Activated CD4-positive, alpha-beta memory T cell treated with anti-CD3 and anti-CD28 coated beads for 36 hours (primary cell): ENCODE measurements at regions of chr2 and their contacts with region 1.

Region 1: DNA sequence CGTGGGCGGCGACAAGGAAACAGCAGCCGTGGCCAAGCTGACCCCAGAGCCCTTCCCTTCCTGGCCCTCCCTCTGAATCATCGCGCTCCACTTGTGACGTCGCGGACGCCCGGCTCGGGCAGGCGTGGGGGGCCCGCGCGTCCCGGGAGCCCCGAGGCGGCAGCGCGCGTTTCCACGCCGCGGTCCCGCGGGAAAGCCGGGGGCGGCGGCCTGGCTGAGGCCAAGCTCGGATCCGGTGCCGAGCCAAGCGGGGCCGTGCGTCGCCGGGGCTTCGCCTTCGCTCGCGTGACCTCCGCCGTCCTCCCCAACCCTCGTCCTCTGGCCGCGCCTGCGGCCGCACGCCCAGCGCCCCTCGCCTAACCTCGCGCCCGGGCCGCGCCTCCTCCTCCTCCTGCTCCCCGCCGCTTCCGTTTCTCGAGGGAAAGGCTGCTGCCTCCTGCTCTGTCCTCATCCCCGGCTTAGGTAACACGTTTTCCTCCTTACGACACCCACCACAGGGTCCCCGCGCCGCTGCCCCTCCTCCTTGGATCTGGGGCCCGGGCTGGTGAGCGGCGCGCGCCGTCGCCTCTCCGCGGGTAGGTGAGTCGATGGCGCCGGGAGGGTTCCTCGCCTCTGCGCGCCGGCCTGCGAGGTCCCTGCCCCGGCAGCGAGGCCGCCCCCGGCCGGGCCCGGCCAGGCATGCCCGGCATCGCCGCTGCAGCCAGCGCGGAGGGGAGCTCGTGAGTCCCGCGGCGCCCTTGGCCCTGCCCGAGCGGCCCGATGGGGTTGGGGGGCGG is at the start of gene INPP1:
- DNase-seq: peak; percentile 65
- H3K4me3 Mint-ChIP-seq: peak within 1 kb of the TSS; percentile 85
- H3K27ac Mint-ChIP-seq: peak within 1 kb of the TSS; percentile 43
- H3K4me1 Mint-ChIP-seq: peaks cover 22% of the 10 kb centered on the region
- H3K27me3 Mint-ChIP-seq: no peaks in the 10 kb centered on the region
- total RNA-seq, gene INPP1: 15.8 to 16.3 TPM

Region 2: DNA sequence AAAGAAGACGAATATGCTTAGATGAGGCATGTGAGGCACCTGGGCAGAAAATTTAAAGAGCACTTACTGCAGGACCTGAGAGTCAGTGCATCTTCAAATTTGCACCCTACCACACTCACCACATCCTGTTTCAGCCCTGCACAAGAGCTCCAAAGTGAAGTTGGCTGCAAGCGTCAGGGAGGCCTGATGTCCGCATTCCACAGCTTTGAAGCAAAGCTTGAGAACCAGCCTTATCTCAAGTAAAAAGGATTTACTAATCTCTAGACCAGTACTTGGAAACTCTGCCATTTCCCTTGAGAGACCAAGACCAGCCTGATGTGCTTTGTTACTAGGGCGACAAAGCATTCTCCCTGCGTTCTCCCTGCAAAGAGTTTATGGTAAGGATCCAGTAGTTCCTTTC is 685.8 kb before region 1 on chr2:
- CTCF ChIA-PET with region 1: no interaction called
- POLR2A ChIA-PET with region 1: no interaction called
- intact Hi-C with region 1: no loop called
- DNase-seq: peak; percentile 81
- H3K4me3 Mint-ChIP-seq: peak overlapping the region; percentile 27
- H3K27ac Mint-ChIP-seq: peak overlapping the region; percentile 79
- H3K4me1 Mint-ChIP-seq: peaks cover 37% of the 10 kb centered on the region
- H3K27me3 Mint-ChIP-seq: no peaks in the 10 kb centered on the region

Region 3: GRCh38 chr2:190355980-190356644 is 12.4 kb after region 1 on chr2:
- CTCF ChIA-PET with region 1: interaction called, 6 read pairs
- POLR2A ChIA-PET with region 1: interaction called, 4 read pairs
- intact Hi-C with region 1: loop called (anchors 2 kb)
- DNase-seq: no peak
- H3K4me3 Mint-ChIP-seq: no peak overlapping the region
- H3K27ac Mint-ChIP-seq: no peak overlapping the region
- H3K4me1 Mint-ChIP-seq: peaks cover 17% of the 10 kb centered on the region
- H3K27me3 Mint-ChIP-seq: no peaks in the 10 kb centered on the region

Region 4: DNA sequence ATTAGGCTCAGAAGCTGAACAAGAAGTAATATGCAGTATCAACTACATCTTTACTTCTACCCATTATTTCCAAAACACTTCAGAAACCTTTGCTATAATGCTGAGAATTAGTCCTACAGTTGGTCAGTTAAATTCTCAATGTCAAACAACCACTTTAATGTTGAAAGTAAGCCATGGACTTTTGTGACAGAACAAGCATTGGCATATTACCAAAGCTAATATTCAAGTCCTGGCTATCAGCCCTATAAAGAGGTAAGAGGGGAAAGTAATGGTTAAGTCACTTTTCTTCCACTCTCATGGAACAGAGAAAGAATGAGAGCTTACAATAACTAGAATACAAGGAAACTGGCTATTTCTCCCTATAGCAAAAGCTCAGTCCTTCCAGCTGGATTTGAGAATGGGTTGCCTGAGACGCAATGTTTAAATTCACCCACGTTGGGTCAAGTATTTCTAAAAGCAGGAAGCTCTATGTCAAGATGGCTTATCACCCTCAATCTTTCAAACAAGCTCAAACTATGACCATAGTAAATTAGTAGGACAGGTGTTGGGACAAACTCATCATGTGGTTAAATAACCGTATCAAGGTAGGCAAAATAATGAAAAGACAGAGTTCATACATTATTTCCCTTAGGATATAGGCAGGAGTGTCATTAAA is 33.0 kb after region 1 on chr2:
- CTCF ChIA-PET with region 1: interaction called, 7 read pairs
- POLR2A ChIA-PET with region 1: no interaction called
- intact Hi-C with region 1: loop called (anchors 1 kb)
- DNase-seq: no peak
- H3K4me3 Mint-ChIP-seq: no peak overlapping the region
- H3K27ac Mint-ChIP-seq: no peak overlapping the region
- H3K4me1 Mint-ChIP-seq: no peaks in the 10 kb centered on the region
- H3K27me3 Mint-ChIP-seq: no peaks in the 10 kb centered on the region